Calu3 (cell line): ENCODE measurements at regions of chr11 and their contacts with region 1.

Region 1: GRCh38 chr11:7986768-7987559 is at the start of gene EIF3F:
- DNase-seq: peak; percentile 87
- H3K4me3 Mint-ChIP-seq: peak within 1 kb of the TSS; percentile 99
- H3K27ac Mint-ChIP-seq: peak within 1 kb of the TSS; percentile 100
- H3K4me1 Mint-ChIP-seq: peaks cover 34% of the 10 kb centered on the region
- H3K27me3 Mint-ChIP-seq: no peaks in the 10 kb centered on the region
- CTCF ChIP-seq: peak; percentile 93
- total RNA-seq, gene EIF3F: 178 and 197 TPM in 2 replicates

Region 2: DNA sequence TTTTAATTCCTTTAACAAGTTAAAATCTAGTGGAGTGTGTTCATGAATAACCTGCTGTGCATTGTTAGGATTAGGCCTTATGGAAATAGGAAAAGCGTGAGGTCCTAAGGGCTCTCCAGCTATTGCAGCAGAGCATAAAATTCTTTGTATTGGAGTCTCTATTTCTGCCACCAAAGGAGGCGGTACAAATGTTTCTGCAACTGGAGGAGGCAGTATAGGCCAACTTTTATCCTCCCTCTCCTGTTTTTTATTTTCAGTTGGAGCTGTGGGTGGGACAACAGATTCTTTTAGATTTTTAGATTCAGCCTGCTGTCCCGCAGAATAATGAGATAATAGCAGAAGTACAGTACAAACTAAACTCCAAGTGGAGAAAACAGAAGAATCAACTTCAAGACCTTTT is 82.0 kb before region 1 on chr11:
- CTCF ChIA-PET with region 1: interaction called, 30 read pairs
- intact Hi-C with region 1: loop called (anchors 2 kb)
- DNase-seq: no peak
- H3K4me3 Mint-ChIP-seq: no peak overlapping the region
- H3K27ac Mint-ChIP-seq: no peak overlapping the region
- H3K4me1 Mint-ChIP-seq: peaks cover 32% of the 10 kb centered on the region
- H3K27me3 Mint-ChIP-seq: no peaks in the 10 kb centered on the region
- CTCF ChIP-seq: no peak